Dendritic cell treated with granulocyte-macrophage colony-stimulating factor and Interleukin-4, amounts not matched to agents 40 ng/mL and 50 ng/mL, for 4 days (primary cell): ENCODE measurements at regions of chrX and their contacts with region 1.

Region 1: GRCh38 chrX:129823115-129823514 is 20.6 kb downstream of the ZDHHC9 start:
- H3K4me3 Mint-ChIP-seq: no peak overlapping the region
- H3K27ac Mint-ChIP-seq: peak overlapping the region; percentile 69
- H3K4me1 Mint-ChIP-seq: peaks cover 6% of the 10 kb centered on the region
- H3K27me3 Mint-ChIP-seq: no peaks in the 10 kb centered on the region

Region 2: GRCh38 chrX:129606918-129607317 is 216.2 kb before region 1 on chrX:
- intact Hi-C with region 1: loop called (anchors 5 kb)
- H3K4me3 Mint-ChIP-seq: no peak overlapping the region
- H3K27ac Mint-ChIP-seq: no peak overlapping the region
- H3K4me1 Mint-ChIP-seq: peaks cover 31% of the 10 kb centered on the region
- H3K27me3 Mint-ChIP-seq: no peaks in the 10 kb centered on the region

Region 3: DNA sequence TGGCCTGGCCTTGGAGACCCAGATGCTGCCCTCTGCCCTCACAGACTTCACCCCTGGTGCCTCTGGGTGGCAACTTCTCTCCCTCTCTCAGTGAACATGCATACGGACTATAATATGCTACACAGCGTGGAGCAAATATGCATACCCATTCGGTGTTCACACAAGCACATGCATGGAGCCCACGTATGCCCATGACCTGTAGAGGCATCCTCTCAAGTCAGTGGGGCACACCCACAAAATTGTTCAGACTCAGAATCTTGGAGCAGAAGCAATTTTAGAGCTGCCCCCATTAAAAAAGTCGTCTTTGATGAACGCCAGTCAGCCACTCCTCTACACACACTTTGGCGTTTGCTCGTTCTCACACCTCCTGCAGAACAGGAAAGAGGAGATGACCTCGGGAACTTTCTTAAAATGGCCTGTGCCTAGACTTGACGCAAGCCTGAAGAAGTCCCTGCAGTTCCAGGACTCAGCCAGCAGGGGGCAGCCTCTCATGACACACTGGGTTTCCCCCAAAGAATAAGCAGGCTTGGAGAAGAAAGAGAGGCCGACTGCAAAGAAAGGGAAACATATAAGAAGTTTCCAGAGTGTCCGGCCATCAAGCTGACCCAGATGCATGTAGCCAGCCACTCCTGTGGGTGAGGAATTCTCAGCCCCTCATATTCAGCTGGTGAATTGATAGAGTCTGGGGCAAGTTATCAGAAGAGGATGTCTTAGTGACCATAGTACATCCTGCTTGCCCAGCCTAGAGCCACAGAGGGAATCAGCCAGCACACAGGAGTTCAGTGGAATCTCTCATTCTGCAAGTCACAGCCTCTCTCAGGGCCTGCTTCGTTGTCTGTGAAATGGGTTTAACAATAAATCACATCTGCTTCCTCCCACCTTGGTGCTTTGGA is 185.7 kb before region 1 on chrX:
- intact Hi-C with region 1: loop called (anchors 2 kb)
- H3K4me3 Mint-ChIP-seq: no peak overlapping the region
- H3K27ac Mint-ChIP-seq: no peak overlapping the region
- H3K4me1 Mint-ChIP-seq: peaks cover 28% of the 10 kb centered on the region
- H3K27me3 Mint-ChIP-seq: no peaks in the 10 kb centered on the region

Region 4: DNA sequence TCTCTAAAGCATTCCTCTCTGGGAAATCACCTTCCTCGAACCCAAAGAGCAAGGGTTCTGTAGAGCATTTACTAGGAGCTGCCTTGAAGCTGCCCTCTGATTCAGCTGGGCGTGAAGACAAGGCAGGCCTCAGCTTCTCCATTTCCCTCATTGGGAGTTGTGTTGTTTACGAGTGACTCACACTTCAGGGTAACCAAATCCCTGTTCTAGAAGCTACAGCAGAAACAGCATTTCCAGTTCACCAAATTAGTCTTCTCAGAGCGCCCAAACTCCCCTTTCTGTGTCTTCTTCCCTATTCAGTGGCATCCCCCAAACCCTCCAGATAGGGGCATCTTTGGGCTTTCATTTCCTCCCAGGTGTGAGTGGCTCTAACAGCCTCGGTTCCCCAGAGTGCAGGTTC is 85.2 kb before region 1 on chrX:
- intact Hi-C with region 1: loop called (anchors 10 kb)
- H3K4me3 Mint-ChIP-seq: no peak overlapping the region
- H3K27ac Mint-ChIP-seq: peak overlapping the region; percentile 88
- H3K4me1 Mint-ChIP-seq: peaks cover 44% of the 10 kb centered on the region
- H3K27me3 Mint-ChIP-seq: no peaks in the 10 kb centered on the region

Region 5: DNA sequence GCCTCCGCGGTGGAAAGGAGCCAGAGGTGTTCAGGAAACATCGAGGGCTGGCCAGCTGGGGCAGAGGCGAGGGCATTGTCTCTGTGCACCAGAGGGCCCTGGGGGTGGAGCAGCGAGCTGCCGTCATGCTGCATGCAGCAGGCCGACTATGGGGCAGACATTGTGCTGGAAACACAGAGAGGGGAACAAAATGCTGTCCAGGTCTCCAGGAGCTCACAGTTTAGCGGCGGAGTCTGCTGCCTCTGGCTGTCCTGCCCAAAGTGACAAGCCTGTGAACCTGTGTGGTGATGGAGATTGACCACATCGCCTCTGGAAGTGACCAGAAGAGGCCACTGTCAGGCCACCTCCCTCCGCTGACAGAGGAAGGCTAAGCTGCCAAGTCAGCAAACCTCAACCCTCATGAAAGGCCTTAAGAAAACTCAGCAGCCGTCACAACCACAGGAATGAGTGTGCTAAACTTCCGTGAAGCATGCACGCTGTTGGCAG is 63.5 kb before region 1 on chrX:
- intact Hi-C with region 1: loop called (anchors 5 kb)
- H3K4me3 Mint-ChIP-seq: peak overlapping the region; percentile 23
- H3K27ac Mint-ChIP-seq: peak overlapping the region; percentile 96
- H3K4me1 Mint-ChIP-seq: peaks cover 76% of the 10 kb centered on the region
- H3K27me3 Mint-ChIP-seq: no peaks in the 10 kb centered on the region

Region 6: DNA sequence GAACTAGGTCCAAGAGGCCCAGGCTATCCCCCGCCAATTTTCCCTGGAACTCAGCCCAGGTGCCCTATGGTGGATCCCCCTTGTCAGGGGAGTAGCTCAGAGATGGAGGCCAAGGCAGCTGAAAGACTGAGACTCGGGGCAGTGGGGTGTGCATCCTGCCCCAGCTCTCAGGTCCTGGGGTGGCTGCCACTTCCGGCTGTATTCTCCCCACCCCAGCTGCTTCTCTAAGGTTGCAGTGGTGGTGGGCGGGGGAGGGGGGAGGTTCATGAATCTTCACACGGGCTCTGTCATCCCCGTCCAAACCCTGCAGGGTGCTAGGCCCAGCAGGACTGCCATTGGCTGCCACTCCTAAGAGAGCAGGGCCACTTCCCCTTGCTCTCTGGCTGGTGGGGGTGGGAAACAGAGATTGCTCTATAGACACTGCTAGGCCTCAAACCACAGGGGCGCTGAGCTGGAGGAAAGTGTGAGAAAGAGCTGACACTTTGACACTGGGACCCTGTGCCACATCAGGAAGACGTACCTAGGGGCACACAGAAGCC is 41.9 kb before region 1 on chrX:
- intact Hi-C with region 1: loop called (anchors 5 kb)
- H3K4me3 Mint-ChIP-seq: peak overlapping the region; percentile 96
- H3K27ac Mint-ChIP-seq: peak overlapping the region; percentile 96
- H3K4me1 Mint-ChIP-seq: peaks cover 59% of the 10 kb centered on the region
- H3K27me3 Mint-ChIP-seq: no peaks in the 10 kb centered on the region

Region 7: DNA sequence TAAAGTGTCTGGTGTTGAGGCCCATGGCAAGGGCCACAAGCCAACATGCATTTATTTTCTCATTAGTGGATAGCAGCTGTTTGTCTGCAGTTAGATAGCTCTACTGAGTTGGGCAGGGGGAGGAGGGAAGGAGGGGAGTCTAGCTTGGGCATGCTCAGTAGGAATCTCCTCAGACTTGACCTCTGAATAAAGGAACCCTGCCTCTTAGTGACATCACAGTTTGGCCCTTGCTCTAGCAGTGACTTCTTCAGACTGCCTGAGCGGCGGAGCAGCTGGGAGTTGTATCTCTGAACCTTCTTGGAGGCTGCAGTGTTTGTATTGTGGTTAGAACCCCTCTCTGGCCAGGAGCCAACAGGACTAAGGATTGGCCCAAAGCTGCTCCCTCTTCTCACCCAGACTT is 216.7 kb after region 1 on chrX:
- intact Hi-C with region 1: no loop called
- H3K4me3 Mint-ChIP-seq: no peak overlapping the region
- H3K27ac Mint-ChIP-seq: no peak overlapping the region
- H3K4me1 Mint-ChIP-seq: no peaks in the 10 kb centered on the region
- H3K27me3 Mint-ChIP-seq: no peaks in the 10 kb centered on the region